ENCODE measurements at regions of chr5 and their contacts with region 1.

Region 1: DNA sequence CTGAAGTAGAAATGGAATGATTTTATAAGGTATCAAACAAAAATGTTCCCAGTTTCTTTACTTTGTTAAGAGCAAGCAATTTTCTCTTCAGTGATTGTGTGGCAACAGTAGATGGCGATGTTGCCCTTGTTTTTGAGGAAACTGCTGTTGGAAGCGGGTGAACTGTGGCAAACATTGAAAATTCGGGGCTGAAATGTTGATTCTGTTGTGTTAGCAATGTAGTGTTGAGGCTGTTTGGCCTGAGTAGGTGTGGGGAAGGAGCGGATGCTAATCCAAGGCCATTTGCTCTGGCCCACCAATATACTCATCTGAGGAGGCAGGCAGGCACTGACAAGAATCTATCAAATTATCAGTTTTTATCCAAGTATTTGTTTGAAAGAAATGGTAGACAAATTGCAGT is 129.8 kb downstream of the SLC12A2 start:
- DNase-seq: peak; percentile 84
- ATAC-seq: peak; percentile 53
- H3K4me3 ChIP-seq: no peak overlapping the region
- H3K27ac ChIP-seq: no peak overlapping the region
- H3K4me1 ChIP-seq: peaks cover 13% of the 10 kb centered on the region
- H3K27me3 ChIP-seq: no peaks in the 10 kb centered on the region
- CTCF ChIP-seq: peak; percentile 97

Region 2: GRCh38 chr5:128228008-128228407 is 14.7 kb after region 1 on chr5:
- CTCF ChIA-PET with region 1: no interaction called
- POLR2A ChIA-PET with region 1: no interaction called
- intact Hi-C with region 1: loop called (anchors 1 kb)
- DNase-seq: peak; percentile 97
- ATAC-seq: peak; percentile 95
- H3K4me3 ChIP-seq: peak overlapping the region; percentile 5; the same call in 1 of the 2 replicates
- H3K27ac ChIP-seq: peak overlapping the region; percentile 89
- H3K4me1 ChIP-seq: peaks cover 22% of the 10 kb centered on the region
- H3K27me3 ChIP-seq: no peaks in the 10 kb centered on the region
- CTCF ChIP-seq: no peak

Region 3: GRCh38 chr5:128349044-128349858 is 135.9 kb after region 1 on chr5:
- CTCF ChIA-PET with region 1: no interaction called
- POLR2A ChIA-PET with region 1: no interaction called
- intact Hi-C with region 1: loop called (anchors 5 kb)
- DNase-seq: peak; percentile 91
- ATAC-seq: peak; percentile 95
- H3K4me3 ChIP-seq: no peak overlapping the region
- H3K27ac ChIP-seq: peak overlapping the region; percentile 51
- H3K4me1 ChIP-seq: peaks cover 14% of the 10 kb centered on the region
- H3K27me3 ChIP-seq: no peaks in the 10 kb centered on the region
- CTCF ChIP-seq: no peak

Region 4: GRCh38 chr5:128498844-128499455 is 285.6 kb after region 1 on chr5:
- CTCF ChIA-PET with region 1: no interaction called
- POLR2A ChIA-PET with region 1: no interaction called
- intact Hi-C with region 1: loop called (anchors 1 kb)
- DNase-seq: peak; percentile 70
- ATAC-seq: no peak
- H3K4me3 ChIP-seq: no peak overlapping the region
- H3K27ac ChIP-seq: no peak overlapping the region
- H3K4me1 ChIP-seq: peaks cover 5% of the 10 kb centered on the region; the same call in 1 of the 2 replicates
- H3K27me3 ChIP-seq: no peaks in the 10 kb centered on the region
- CTCF ChIP-seq: peak; percentile 77

Region 5: DNA sequence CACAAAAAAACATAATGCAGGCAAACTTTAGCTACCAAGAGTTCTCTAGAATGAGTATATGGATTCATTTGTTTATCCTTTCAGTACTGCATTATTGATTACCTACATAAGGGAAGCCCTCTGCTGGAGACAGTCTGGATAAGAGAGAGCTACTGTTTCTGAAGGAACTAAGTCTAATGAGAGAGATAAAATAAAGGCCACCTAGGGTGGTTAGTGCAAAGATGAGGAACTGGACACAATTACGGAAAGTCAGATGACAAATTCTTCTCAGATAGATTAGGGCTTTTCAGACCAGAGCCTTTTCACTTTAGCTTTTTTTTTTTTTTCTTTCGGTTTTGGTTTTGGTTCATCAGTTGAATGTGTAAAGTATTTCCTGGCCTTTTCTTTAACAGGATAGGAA is 912.5 kb after region 1 on chr5:
- CTCF ChIA-PET with region 1: no interaction called
- POLR2A ChIA-PET with region 1: no interaction called
- intact Hi-C with region 1: loop called (anchors 2 kb)
- DNase-seq: no peak
- ATAC-seq: no peak
- H3K4me3 ChIP-seq: no peak overlapping the region
- H3K27ac ChIP-seq: no peak overlapping the region
- H3K4me1 ChIP-seq: 0 out of 2 replicates have a peak, but pooled peaks cover 9% of the 10 kb centered on the region
- H3K27me3 ChIP-seq: no peaks in the 10 kb centered on the region
- CTCF ChIP-seq: peak; percentile 28; the same call in 1 of the 2 replicates

Measured in PC-3 (cell line).